Common myeloid progenitor, CD34-positive (primary cell): ENCODE measurements at regions of chr14 and their contacts with region 1.

Region 1: DNA sequence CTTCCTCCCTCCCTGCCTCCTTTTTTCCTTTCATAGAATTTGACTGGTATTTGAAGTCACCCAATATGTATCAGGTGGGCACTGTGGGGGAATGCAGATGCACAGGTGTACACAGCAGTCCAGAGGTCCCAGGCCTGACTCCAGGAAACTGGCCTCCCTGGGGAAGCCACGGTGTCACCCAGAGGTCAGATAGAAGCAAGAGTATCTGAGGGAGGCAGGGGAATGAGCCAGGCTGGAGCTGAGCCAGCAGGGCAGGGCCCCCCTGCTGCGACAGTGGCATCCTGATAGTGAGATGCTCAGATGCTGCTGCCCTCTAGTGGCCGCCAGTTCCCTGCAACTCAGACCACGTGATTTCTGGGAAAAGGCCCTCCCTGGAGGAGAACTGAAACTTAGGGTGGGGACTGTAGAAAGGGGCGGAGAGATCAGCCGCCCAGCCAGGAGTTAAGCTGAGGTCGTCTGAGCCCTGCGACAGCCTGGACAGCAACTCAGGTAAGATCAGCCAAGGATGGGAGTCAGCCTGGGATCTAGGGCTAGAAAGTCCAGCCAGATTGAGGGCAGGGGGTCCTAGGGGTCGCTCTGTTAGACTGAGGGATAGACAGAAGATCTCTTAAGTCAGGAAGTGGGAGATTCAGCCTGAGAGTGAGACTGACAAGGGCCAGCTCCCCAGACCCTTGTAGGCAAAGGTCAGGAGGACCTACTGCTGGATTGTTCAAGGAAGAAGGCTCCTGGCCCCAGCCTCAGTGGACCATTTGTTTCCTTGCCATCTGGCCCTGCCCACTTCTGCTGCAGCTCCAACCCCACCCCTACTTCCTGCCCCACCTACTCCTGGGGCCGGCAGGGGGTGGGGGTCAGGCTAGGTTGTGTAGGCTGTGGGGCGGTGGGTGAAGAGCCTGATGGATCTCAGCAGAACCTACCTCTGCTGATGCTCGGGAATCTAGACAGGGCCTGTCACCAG is at the start of gene IRF9:
- DNase-seq: peak; percentile 96 to 98 (median 96)
- H3K4me3 ChIP-seq: peak within 1 kb of the TSS; percentile 59 to 92 (median 86)
- H3K27ac ChIP-seq: peak within 1 kb of the TSS; percentile 94 to 96
- H3K4me1 ChIP-seq: peaks cover 10 to 28% (median 19%) of the 10 kb centered on the region in 4 experiments
- H3K27me3 ChIP-seq: no peaks in the 10 kb centered on the region

Region 2: GRCh38 chr14:24108336-24108874 is 52.7 kb before region 1 on chr14:
- CTCF ChIA-PET with region 1: interaction called, 16 read pairs
- POLR2A ChIA-PET with region 1: interaction called, 3 read pairs
- DNase-seq: no peak
- H3K4me3 ChIP-seq: peak overlapping the region in 1 of 7 experiments; percentile 38
- H3K27ac ChIP-seq: peak overlapping the region in 1 of 2 experiments; percentile 17
- H3K4me1 ChIP-seq: peaks cover 3 to 20% (median 9%) of the 10 kb centered on the region in 4 experiments
- H3K27me3 ChIP-seq: no peaks in the 10 kb centered on the region

Region 3: GRCh38 chr14:24135834-24136542 is 25.1 kb before region 1 on chr14 and contains the start of gene PSME1:
- CTCF ChIA-PET with region 1: interaction called, 61 read pairs
- POLR2A ChIA-PET with region 1: interaction called, 15 read pairs
- DNase-seq: peak; percentile 88 to 95 (median 94)
- H3K4me3 ChIP-seq: peak within 1 kb of the TSS; percentile 71 to 96 (median 87)
- H3K27ac ChIP-seq: peak within 1 kb of the TSS; percentile 58 to 83
- H3K4me1 ChIP-seq: peaks cover 2 to 56% (median 36%) of the 10 kb centered on the region in 4 experiments
- H3K27me3 ChIP-seq: no peaks in the 10 kb centered on the region

Region 4: GRCh38 chr14:24146978-24147760 is 14.0 kb before region 1 on chr14 and contains the start of gene RNF31:
- CTCF ChIA-PET with region 1: interaction called, 112 read pairs
- POLR2A ChIA-PET with region 1: interaction called, 16 read pairs
- DNase-seq: peak; percentile 99
- H3K4me3 ChIP-seq: peak within 1 kb of the TSS; percentile 56 to 100 (median 97)
- H3K27ac ChIP-seq: peak within 1 kb of the TSS; percentile 71 to 85
- H3K4me1 ChIP-seq: peaks cover 4 to 29% (median 27%) of the 10 kb centered on the region in 4 experiments
- H3K27me3 ChIP-seq: no peaks in the 10 kb centered on the region

Region 5: DNA sequence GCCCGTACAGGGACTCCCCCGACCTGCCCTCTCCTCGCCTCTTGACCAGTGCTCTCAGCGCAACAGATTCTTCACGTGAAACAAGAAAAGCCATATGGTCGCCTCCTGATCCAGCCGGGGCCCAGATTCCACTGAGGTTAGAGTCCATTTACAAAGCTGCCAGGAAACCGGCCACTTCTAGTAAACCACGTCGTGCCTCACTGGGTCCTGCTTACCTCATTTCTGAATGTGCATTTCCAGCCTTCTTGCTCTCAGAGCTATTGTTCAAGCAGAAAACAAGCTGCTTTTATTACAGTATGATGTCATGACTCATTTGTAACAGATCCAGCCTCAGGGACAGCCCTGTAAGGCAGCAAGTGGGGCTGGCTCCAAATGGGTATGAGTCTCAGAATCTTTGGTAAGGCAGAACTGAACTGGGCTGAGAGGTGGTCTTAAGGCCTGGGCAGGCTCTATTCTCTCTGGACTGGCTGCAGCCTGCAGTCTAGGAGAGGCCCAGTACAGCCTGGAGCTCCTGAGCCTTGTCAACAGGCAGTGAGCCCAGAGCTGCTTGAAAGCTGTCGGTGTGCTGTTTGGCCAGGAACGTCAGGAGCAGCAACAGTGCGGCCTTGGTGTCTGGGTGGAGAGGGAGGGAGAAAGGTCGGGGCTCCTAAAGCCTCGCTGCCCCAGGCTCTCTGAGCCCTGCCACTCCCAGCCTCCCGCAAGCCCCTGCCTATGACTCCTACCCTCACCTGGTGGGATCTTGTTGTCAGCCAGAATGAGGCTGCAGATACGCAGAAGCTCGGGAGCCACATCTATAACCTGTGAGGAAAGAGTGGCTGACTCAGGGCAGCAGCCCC is 19.1 kb after region 1 on chr14:
- CTCF ChIA-PET with region 1: interaction called, 17 read pairs
- POLR2A ChIA-PET with region 1: no interaction called
- DNase-seq: no peak
- H3K4me3 ChIP-seq: no peak overlapping the region
- H3K27ac ChIP-seq: no peak overlapping the region
- H3K4me1 ChIP-seq: no peaks in the 10 kb centered on the region
- H3K27me3 ChIP-seq: no peaks in the 10 kb centered on the region